ENCODE measurements at regions of chr12 and their contacts with region 1.

Region 1: DNA sequence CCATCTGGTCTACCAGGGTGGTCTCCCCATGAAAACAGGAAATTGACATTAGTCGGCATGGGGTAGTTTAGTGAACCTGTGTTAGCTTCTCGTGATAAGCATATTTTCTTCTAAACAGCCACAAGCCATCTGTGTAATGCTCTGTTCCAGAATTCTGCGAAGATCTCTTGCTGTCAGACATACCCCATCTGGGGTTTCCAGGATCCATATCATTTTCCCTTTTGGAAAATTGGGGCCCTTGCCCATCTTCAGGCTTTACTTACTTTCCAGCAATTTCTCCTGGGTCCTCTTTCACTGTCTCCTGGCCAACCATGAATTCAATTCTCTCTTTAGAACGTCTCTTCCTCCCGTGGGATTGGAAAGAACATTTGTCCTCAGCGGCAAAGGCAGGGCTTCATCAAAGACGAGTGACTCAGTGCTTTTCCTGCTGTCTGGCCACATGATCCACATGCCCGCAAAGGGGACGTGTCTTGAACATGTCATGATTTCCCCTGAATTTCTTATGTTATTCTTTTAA is 21.4 kb upstream of the NCOR2 start:
- DNase-seq: peak in 1 of 2 donors; percentile 58
- ATAC-seq: peak; percentile 71 to 88 (median 79)
- H3K4me3 ChIP-seq: no peak overlapping the region
- H3K27ac ChIP-seq: peak overlapping the region; percentile 73
- H3K4me1 ChIP-seq: peaks cover 14% of the 10 kb centered on the region
- H3K27me3 ChIP-seq: no peaks in the 10 kb centered on the region
- CTCF ChIP-seq: no peak

Region 2: DNA sequence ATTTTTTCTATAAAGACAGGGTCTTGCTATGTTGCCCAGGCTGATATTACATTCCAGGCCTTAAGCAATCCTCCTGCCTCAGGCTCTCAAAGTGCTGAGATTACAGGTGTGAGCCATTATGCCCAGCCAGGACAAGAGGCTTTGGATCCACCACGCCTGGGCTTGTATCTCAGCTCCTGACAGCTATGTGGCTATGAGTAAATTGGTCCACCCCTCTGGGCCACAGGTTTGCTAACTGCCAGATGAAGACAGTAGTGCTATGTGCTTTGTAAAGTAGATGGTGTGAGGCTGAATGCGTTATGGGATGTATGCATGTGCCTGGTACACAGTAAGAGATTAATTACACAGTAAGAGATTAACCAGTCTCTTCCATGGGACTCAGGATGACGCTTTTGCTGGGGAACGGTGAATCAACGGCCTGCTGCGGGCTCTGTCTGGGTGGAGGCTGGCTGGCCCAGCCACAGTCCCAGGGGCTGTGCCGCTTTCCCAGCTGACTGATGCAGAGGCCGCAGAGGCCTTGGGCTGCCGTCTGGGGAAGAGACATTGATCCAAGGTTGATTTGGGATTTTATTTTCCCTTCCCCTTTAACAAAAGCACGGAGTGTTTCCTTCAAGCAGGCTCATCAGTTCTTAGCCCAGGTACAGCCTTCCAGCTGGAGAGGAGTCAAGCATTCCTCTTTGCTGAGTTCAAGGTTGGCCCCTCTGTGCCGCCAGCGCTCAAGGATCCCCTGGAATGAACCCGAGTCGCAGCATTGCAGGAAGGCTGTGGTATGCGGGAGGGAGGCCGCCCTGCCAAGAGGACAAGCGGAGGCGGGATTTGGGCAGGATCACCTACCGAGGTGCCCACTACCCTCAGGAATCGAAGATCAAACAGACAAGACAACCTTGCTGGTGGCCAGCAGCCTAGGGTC is 32.2 kb after region 1 on chr12:
- intact Hi-C with region 1: loop called in 1 of 2 experiments (anchors 5 kb)
- DNase-seq: peak; percentile 84 to 88
- ATAC-seq: peak; percentile 89 to 95 (median 92)
- H3K4me3 ChIP-seq: peak overlapping the region; percentile 8
- H3K27ac ChIP-seq: peak overlapping the region; percentile 56
- H3K4me1 ChIP-seq: peaks cover 17% of the 10 kb centered on the region
- H3K27me3 ChIP-seq: no peaks in the 10 kb centered on the region
- CTCF ChIP-seq: no peak

Region 3: DNA sequence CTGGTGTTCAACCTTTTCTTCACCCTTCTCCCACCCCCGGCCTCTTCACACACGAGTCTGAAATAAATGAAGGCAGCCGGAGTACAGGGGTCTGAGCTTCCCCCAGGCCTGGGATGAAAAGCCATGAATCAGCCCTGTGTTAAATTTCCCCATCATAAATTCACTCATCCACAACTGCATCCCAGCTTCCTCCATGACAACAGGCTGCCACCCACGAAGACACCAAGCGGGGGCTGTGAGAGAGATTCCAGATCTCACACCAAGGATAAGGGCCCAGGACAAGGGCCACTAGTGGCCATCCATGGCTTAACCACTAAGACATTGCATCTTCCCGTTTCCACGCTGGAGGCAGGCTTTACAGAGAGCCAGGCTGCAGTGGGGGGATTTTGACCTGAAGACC is 72.5 kb after region 1 on chr12:
- intact Hi-C with region 1: loop called in 1 of 2 experiments (anchors 5 kb)
- DNase-seq: no peak
- ATAC-seq: no peak
- H3K4me3 ChIP-seq: no peak overlapping the region
- H3K27ac ChIP-seq: no peak overlapping the region
- H3K4me1 ChIP-seq: no peaks in the 10 kb centered on the region
- H3K27me3 ChIP-seq: no peaks in the 10 kb centered on the region
- CTCF ChIP-seq: no peak

Region 4: GRCh38 chr12:124713436-124714082 is 124.8 kb after region 1 on chr12:
- intact Hi-C with region 1: no loop called
- DNase-seq: no peak
- ATAC-seq: peak in 3 of 4 donors; percentile 17 to 46 (median 42)
- H3K4me3 ChIP-seq: peak overlapping the region; percentile 40
- H3K27ac ChIP-seq: peak overlapping the region; percentile 80
- H3K4me1 ChIP-seq: peaks cover 10% of the 10 kb centered on the region
- H3K27me3 ChIP-seq: no peaks in the 10 kb centered on the region
- CTCF ChIP-seq: no peak